ENCODE measurements at regions of chr2 and their contacts with region 1.

Region 1: GRCh38 chr2:57990118-57990725 is 56.4 kb upstream of the VRK2 start:
- DNase-seq: peak; percentile 30
- ATAC-seq: peak; percentile 96
- H3K4me3 ChIP-seq: no peak overlapping the region
- H3K27ac ChIP-seq: no peak overlapping the region
- H3K4me1 ChIP-seq: no peaks in the 10 kb centered on the region
- H3K27me3 ChIP-seq: no peaks in the 10 kb centered on the region
- CTCF ChIP-seq: no peak
- EP300 ChIP-seq: 0 out of 4 replicates have a peak, but pooled peaks of 1 of the 2 experiments have one; percentile 35
- POLR2A ChIP-seq: no peak
- RAD21 ChIP-seq: 0 out of 2 replicates have a peak, but pooled peaks have one; percentile 0

Region 2: DNA sequence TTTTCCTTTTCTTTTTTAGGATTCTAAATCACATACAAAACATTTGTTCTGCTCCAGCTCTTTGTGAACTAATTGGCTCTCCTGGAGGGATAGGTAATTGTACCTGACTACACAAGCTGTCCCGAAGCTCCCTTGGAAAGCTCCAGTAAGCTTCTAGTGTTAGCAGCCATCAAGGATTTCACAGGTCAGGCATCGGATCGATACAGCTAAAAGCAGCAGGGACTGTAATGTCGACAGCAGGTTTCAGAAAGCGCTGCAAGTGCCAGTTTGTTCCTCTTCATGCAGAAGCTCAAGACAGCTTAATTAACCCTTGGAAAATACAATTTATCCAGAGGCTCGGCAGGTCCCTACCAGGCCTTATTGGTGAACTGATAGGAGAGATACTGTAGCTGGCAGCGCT is 30.8 kb before region 1 on chr2:
- CTCF ChIA-PET with region 1: no interaction called
- POLR2A ChIA-PET with region 1: interaction called, 4 read pairs
- RAD21 ChIA-PET with region 1: no interaction called
- SMC1A ChIA-PET with region 1: interaction called, 16 read pairs
- in situ Hi-C with region 1: no loop called
- intact Hi-C with region 1: no loop called
- DNase-seq: no peak
- ATAC-seq: no peak
- H3K4me3 ChIP-seq: no peak overlapping the region
- H3K27ac ChIP-seq: no peak overlapping the region
- H3K4me1 ChIP-seq: no peaks in the 10 kb centered on the region
- H3K27me3 ChIP-seq: no peaks in the 10 kb centered on the region
- CTCF ChIP-seq: no peak
- EP300 ChIP-seq: no peak
- POLR2A ChIP-seq: no peak
- RAD21 ChIP-seq: no peak

Region 3: GRCh38 chr2:57973621-57974186 is 16.5 kb before region 1 on chr2:
- CTCF ChIA-PET with region 1: interaction called, 8 read pairs
- POLR2A ChIA-PET with region 1: interaction called, 3 read pairs
- RAD21 ChIA-PET with region 1: interaction called, 13 read pairs
- SMC1A ChIA-PET with region 1: interaction called, 4 read pairs
- in situ Hi-C with region 1: no loop called
- intact Hi-C with region 1: no loop called
- DNase-seq: no peak
- ATAC-seq: peak; percentile 22; the same call in 2 of the 3 replicates
- H3K4me3 ChIP-seq: no peak overlapping the region
- H3K27ac ChIP-seq: no peak overlapping the region
- H3K4me1 ChIP-seq: no peaks in the 10 kb centered on the region
- H3K27me3 ChIP-seq: no peaks in the 10 kb centered on the region
- CTCF ChIP-seq: no peak
- EP300 ChIP-seq: no peak
- POLR2A ChIP-seq: no peak
- RAD21 ChIP-seq: no peak

Region 4: GRCh38 chr2:58019209-58019608 is 29.0 kb after region 1 on chr2:
- CTCF ChIA-PET with region 1: no interaction called
- POLR2A ChIA-PET with region 1: interaction called, 3 read pairs
- RAD21 ChIA-PET with region 1: interaction called, 14 read pairs
- SMC1A ChIA-PET with region 1: interaction called, 12 read pairs
- in situ Hi-C with region 1: no loop called
- intact Hi-C with region 1: no loop called
- DNase-seq: no peak
- ATAC-seq: peak; percentile 81
- H3K4me3 ChIP-seq: no peak overlapping the region
- H3K27ac ChIP-seq: no peak overlapping the region
- H3K4me1 ChIP-seq: peaks cover 12% of the 10 kb centered on the region; the same call in 1 of the 2 replicates
- H3K27me3 ChIP-seq: no peaks in the 10 kb centered on the region
- CTCF ChIP-seq: no peak
- EP300 ChIP-seq: peak; percentile 56
- POLR2A ChIP-seq: no peak
- RAD21 ChIP-seq: no peak

Region 5: GRCh38 chr2:58025150-58025933 is 35.1 kb after region 1 on chr2:
- CTCF ChIA-PET with region 1: no interaction called
- POLR2A ChIA-PET with region 1: no interaction called
- RAD21 ChIA-PET with region 1: interaction called, 14 read pairs
- SMC1A ChIA-PET with region 1: interaction called, 19 read pairs
- in situ Hi-C with region 1: no loop called
- intact Hi-C with region 1: no loop called
- DNase-seq: no peak
- ATAC-seq: peak; percentile 54
- H3K4me3 ChIP-seq: no peak overlapping the region
- H3K27ac ChIP-seq: no peak overlapping the region
- H3K4me1 ChIP-seq: peaks cover 14% of the 10 kb centered on the region
- H3K27me3 ChIP-seq: no peaks in the 10 kb centered on the region
- CTCF ChIP-seq: no peak
- EP300 ChIP-seq: no peak
- POLR2A ChIP-seq: no peak
- RAD21 ChIP-seq: no peak

Region 6: DNA sequence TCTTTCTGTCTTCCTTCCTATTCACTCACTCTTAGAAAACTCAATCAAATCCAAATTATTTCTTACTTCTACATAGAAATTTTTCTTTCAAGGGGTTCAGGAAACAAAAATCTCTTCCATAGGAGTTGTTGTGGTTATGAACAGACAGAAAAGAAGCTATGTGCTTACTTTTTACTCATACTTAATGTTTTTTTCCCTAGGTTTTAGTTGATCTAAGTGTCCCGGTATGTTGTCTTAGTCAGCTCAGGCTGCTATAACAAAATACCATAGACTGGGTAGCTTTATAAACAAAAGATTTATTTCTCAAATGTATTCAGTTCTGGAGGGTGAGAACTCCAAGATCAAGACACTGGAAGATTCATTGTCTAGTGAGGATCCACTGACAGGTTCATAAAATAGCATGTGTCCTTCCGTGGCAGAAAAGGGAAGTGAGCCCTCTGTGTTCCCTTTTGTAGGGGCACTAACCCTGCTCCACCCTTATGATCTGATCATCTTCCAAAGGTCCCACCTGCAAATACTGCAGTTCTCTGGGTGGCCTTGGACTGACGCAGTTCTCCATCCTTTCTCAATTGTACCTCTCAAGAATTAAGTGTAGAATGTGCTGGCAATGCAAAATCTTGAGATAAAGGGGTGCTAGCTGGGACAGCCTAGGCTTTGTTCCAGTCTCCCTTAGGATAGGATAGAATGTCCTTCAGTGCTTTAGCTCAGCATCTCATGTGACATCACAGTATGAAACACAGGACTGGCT is 42.0 kb after region 1 on chr2:
- CTCF ChIA-PET with region 1: interaction called, 3 read pairs
- POLR2A ChIA-PET with region 1: no interaction called
- RAD21 ChIA-PET with region 1: interaction called, 4 read pairs
- SMC1A ChIA-PET with region 1: interaction called, 19 read pairs
- in situ Hi-C with region 1: no loop called
- intact Hi-C with region 1: no loop called
- DNase-seq: no peak
- ATAC-seq: peak; percentile 83
- H3K4me3 ChIP-seq: 0 out of 2 replicates have a peak overlapping the region, but pooled peaks have one; percentile 1
- H3K27ac ChIP-seq: peak overlapping the region; percentile 39
- H3K4me1 ChIP-seq: peaks cover 40% of the 10 kb centered on the region
- H3K27me3 ChIP-seq: no peaks in the 10 kb centered on the region
- CTCF ChIP-seq: no peak
- EP300 ChIP-seq: no peak
- POLR2A ChIP-seq: no peak
- RAD21 ChIP-seq: no peak

Region 7: GRCh38 chr2:58072102-58072501 is 81.9 kb after region 1 on chr2:
- CTCF ChIA-PET with region 1: no interaction called
- POLR2A ChIA-PET with region 1: no interaction called
- RAD21 ChIA-PET with region 1: no interaction called
- SMC1A ChIA-PET with region 1: no interaction called
- in situ Hi-C with region 1: no loop called
- intact Hi-C with region 1: no loop called
- DNase-seq: no peak
- ATAC-seq: peak; percentile 72
- H3K4me3 ChIP-seq: no peak overlapping the region; the same call in 1 of the 2 replicates
- H3K27ac ChIP-seq: no peak overlapping the region; the same call in 1 of the 2 replicates
- H3K4me1 ChIP-seq: peaks cover 5% of the 10 kb centered on the region; the same call in 1 of the 2 replicates
- H3K27me3 ChIP-seq: no peaks in the 10 kb centered on the region
- CTCF ChIP-seq: no peak
- EP300 ChIP-seq: no peak
- POLR2A ChIP-seq: no peak
- RAD21 ChIP-seq: no peak

Measured in GM12878 (cell line).